ENCODE measurements at regions of chr1 and their contacts with region 1.

Region 1: DNA sequence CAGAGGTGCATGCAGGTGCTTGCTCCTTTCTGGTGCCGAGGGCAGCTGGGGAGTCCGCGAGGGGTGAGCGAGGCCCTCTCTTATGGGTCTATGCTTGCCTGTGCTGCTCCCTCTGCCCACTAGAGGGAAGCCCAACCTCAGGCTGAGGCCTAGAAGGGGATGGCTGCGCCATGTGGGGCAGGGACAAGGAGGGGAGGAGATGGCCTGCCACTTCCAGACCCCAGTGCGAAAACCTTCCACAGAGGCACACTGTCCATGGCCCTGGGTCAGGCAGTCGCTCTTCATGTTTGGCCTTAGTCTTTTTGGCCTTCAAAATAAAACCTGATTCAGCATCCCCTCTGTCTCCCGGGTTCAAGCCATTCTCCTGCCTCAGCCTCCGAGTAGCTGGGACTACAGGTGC is 14.0 kb downstream of the RHBG start:
- DNase-seq: peak; percentile 21 to 73 (median 64)
- ATAC-seq: peak; percentile 82
- H3K4me3 ChIP-seq: no peak overlapping the region
- H3K4me3 Mint-ChIP-seq: no peak overlapping the region
- H3K27ac ChIP-seq: no peak overlapping the region
- H3K27ac Mint-ChIP-seq: no peak overlapping the region
- H3K4me1 ChIP-seq: peaks cover 6% of the 10 kb centered on the region
- H3K4me1 Mint-ChIP-seq: peaks cover 7% of the 10 kb centered on the region
- H3K27me3 ChIP-seq: peaks cover 0 to 3% of the 10 kb centered on the region in 2 experiments
- H3K27me3 Mint-ChIP-seq: peaks cover 9% of the 10 kb centered on the region
- CTCF ChIP-seq: peak; percentile 61

Region 2: GRCh38 chr1:156371553-156372264 is 11.3 kb before region 1 on chr1:
- CTCF ChIA-PET with region 1: interaction called, 34 read pairs
- POLR2A ChIA-PET with region 1: no interaction called
- intact Hi-C with region 1: no loop called
- DNase-seq: no peak
- ATAC-seq: no peak
- H3K4me3 ChIP-seq: no peak overlapping the region
- H3K4me3 Mint-ChIP-seq: no peak overlapping the region
- H3K27ac ChIP-seq: no peak overlapping the region
- H3K27ac Mint-ChIP-seq: no peak overlapping the region
- H3K4me1 ChIP-seq: no peaks in the 10 kb centered on the region
- H3K4me1 Mint-ChIP-seq: peaks cover 5% of the 10 kb centered on the region
- H3K27me3 ChIP-seq: peaks cover 5 to 8% of the 10 kb centered on the region in 2 experiments
- H3K27me3 Mint-ChIP-seq: peaks cover 34% of the 10 kb centered on the region
- CTCF ChIP-seq: no peak

Region 3: GRCh38 chr1:156406251-156406650 is 23.2 kb after region 1 on chr1:
- CTCF ChIA-PET with region 1: interaction called, 16 read pairs
- POLR2A ChIA-PET with region 1: no interaction called
- intact Hi-C with region 1: no loop called
- DNase-seq: no peak
- ATAC-seq: no peak
- H3K4me3 ChIP-seq: no peak overlapping the region
- H3K4me3 Mint-ChIP-seq: no peak overlapping the region
- H3K27ac ChIP-seq: no peak overlapping the region
- H3K27ac Mint-ChIP-seq: no peak overlapping the region
- H3K4me1 ChIP-seq: no peaks in the 10 kb centered on the region
- H3K4me1 Mint-ChIP-seq: no peaks in the 10 kb centered on the region
- H3K27me3 ChIP-seq: peaks cover 0 to 3% of the 10 kb centered on the region in 2 experiments
- H3K27me3 Mint-ChIP-seq: peaks cover 46% of the 10 kb centered on the region
- CTCF ChIP-seq: no peak

Region 4: DNA sequence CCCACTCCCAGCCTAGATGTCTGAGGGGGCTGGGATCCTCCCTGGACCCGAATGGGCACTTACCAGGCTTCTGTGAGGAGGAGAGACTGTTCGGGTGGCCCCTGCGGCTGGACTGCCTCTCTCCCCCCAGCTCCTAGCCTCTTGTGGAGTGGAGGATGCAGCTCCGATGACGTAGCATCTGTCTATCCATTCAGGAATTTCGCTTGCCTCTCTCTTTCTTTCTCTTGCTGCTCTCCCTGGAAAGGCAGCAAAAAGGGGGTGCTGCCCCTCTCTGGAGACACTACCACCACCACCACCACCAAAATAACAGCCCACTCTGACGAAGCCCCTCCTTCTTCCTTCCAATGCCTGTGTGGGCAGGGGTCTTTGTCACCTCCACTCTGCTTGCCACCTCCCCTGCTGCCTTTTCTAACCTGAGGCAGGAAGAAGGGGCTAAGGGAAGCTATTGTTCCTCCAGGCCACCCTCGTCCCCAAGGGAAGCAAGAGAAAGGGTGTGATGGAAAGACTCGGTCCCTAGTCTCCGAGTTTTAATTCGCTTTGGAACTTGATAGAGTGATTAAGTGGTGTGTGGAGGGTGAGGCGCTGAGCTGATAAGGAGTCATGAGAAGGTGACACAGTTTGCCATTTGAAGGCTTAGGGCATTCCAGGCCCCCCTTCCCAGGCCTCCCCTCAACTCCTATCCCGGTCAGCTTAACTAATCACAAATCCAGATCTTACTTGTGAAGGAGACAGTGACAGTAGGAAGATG is 46.5 kb after region 1 on chr1:
- CTCF ChIA-PET with region 1: interaction called, 24 read pairs
- POLR2A ChIA-PET with region 1: no interaction called
- intact Hi-C with region 1: no loop called
- DNase-seq: no peak
- ATAC-seq: no peak
- H3K4me3 ChIP-seq: no peak overlapping the region
- H3K4me3 Mint-ChIP-seq: no peak overlapping the region
- H3K27ac ChIP-seq: no peak overlapping the region
- H3K27ac Mint-ChIP-seq: no peak overlapping the region
- H3K4me1 ChIP-seq: no peaks in the 10 kb centered on the region
- H3K4me1 Mint-ChIP-seq: peaks cover 3% of the 10 kb centered on the region
- H3K27me3 ChIP-seq: peaks cover 28 to 38% of the 10 kb centered on the region in 2 experiments
- H3K27me3 Mint-ChIP-seq: peaks cover 80% of the 10 kb centered on the region
- CTCF ChIP-seq: no peak

Region 5: GRCh38 chr1:156456622-156457465 is 73.8 kb after region 1 on chr1:
- CTCF ChIA-PET with region 1: interaction called, 372 read pairs
- POLR2A ChIA-PET with region 1: interaction called, 3 read pairs
- intact Hi-C with region 1: no loop called
- DNase-seq: peak; percentile 92 to 99 (median 96)
- ATAC-seq: peak; percentile 84
- H3K4me3 ChIP-seq: peak overlapping the region; percentile 57 to 62
- H3K4me3 Mint-ChIP-seq: peak overlapping the region; percentile 93
- H3K27ac ChIP-seq: peak overlapping the region; percentile 83 to 89
- H3K27ac Mint-ChIP-seq: peak overlapping the region; percentile 100
- H3K4me1 ChIP-seq: peaks cover 4% of the 10 kb centered on the region
- H3K4me1 Mint-ChIP-seq: peaks cover 17% of the 10 kb centered on the region
- H3K27me3 ChIP-seq: no peaks in the 10 kb centered on the region
- H3K27me3 Mint-ChIP-seq: no peaks in the 10 kb centered on the region
- CTCF ChIP-seq: no peak

Region 6: GRCh38 chr1:156601122-156601830 is 218.3 kb after region 1 on chr1 and contains the start of gene GPATCH4:
- CTCF ChIA-PET with region 1: interaction called, 23 read pairs
- POLR2A ChIA-PET with region 1: no interaction called
- intact Hi-C with region 1: no loop called
- DNase-seq: peak in 8 of 9 experiments; percentile 61 to 86 (median 72)
- ATAC-seq: peak; percentile 80
- H3K4me3 ChIP-seq: peak within 1 kb of the TSS; percentile 65 to 70
- H3K4me3 Mint-ChIP-seq: peak within 1 kb of the TSS; percentile 98
- H3K27ac ChIP-seq: peak within 1 kb of the TSS; percentile 57 to 80
- H3K27ac Mint-ChIP-seq: peak within 1 kb of the TSS; percentile 98
- H3K4me1 ChIP-seq: peaks cover 24% of the 10 kb centered on the region
- H3K4me1 Mint-ChIP-seq: peaks cover 34% of the 10 kb centered on the region
- H3K27me3 ChIP-seq: no peaks in the 10 kb centered on the region
- H3K27me3 Mint-ChIP-seq: no peaks in the 10 kb centered on the region
- CTCF ChIP-seq: no peak
- total RNA-seq, gene GPATCH4: 46.4 to 46.7 TPM

Region 7: GRCh38 chr1:156625436-156626078 is 242.5 kb after region 1 on chr1:
- CTCF ChIA-PET with region 1: interaction called, 10 read pairs
- POLR2A ChIA-PET with region 1: no interaction called
- intact Hi-C with region 1: no loop called
- DNase-seq: peak; percentile 37 to 82 (median 70)
- ATAC-seq: peak; percentile 77
- H3K4me3 ChIP-seq: peak overlapping the region; percentile 26 to 46
- H3K4me3 Mint-ChIP-seq: peak overlapping the region; percentile 75
- H3K27ac ChIP-seq: no peak overlapping the region
- H3K27ac Mint-ChIP-seq: no peak overlapping the region
- H3K4me1 ChIP-seq: peaks cover 23% of the 10 kb centered on the region
- H3K4me1 Mint-ChIP-seq: peaks cover 14% of the 10 kb centered on the region
- H3K27me3 ChIP-seq: peaks cover 26 to 33% of the 10 kb centered on the region in 2 experiments
- H3K27me3 Mint-ChIP-seq: peaks cover 53% of the 10 kb centered on the region
- CTCF ChIP-seq: peak; percentile 83

Measured in CD8-positive, alpha-beta T cell (primary cell).